Tibial artery (tissue), 4 donors: ENCODE measurements at regions of chr10 and their contacts with region 1.

Region 1: GRCh38 chr10:73644015-73644743 is 2.9 kb upstream of the MYOZ1 start:
- DNase-seq: peak; percentile 58 to 74
- H3K4me3 ChIP-seq: no peak overlapping the region
- H3K27ac ChIP-seq: peak overlapping the region; percentile 45 to 84
- H3K4me1 ChIP-seq: peaks cover 11 to 56% (median 29%) of the 10 kb centered on the region in 4 donors
- H3K27me3 ChIP-seq: no peaks in the 10 kb centered on the region
- CTCF ChIP-seq: peak; percentile 87 to 98

Region 2: DNA sequence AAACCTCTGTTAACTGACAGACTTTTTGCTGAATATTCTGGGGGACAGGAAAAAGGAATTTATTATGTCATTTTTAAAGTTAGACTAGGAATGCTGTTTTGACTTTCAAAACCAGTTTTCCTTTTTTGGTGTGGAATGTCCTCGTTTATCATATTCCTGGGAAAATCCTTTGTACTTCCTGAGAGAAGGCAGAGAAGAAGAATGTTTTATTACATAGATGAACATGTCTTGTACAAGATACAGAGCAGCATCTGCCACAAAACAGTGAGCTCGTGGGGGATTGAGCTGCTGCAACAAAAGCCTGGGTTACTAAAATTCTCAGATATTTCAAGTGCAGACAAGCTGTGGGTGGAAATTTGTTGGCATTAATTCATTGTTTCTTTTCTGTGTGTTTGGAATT is 932.0 kb before region 1 on chr10:
- intact Hi-C with region 1: no loop called
- DNase-seq: no peak
- H3K4me3 ChIP-seq: peak overlapping the region; percentile 27 to 38
- H3K27ac ChIP-seq: peak overlapping the region; percentile 65 to 75
- H3K4me1 ChIP-seq: peaks cover 0 to 68% (median 23%) of the 10 kb centered on the region in 4 donors
- H3K27me3 ChIP-seq: no peaks in the 10 kb centered on the region
- CTCF ChIP-seq: no peak

Region 3: GRCh38 chr10:73529089-73529832 is 114.9 kb before region 1 on chr10:
- intact Hi-C with region 1: loop called (anchors 2 kb)
- DNase-seq: peak in 1 of 2 donors; percentile 28
- H3K4me3 ChIP-seq: no peak overlapping the region
- H3K27ac ChIP-seq: no peak overlapping the region
- H3K4me1 ChIP-seq: no peaks in the 10 kb centered on the region
- H3K27me3 ChIP-seq: no peaks in the 10 kb centered on the region
- CTCF ChIP-seq: peak; percentile 77 to 92

Region 4: GRCh38 chr10:73559590-73559989 is 84.6 kb before region 1 on chr10:
- intact Hi-C with region 1: no loop called
- DNase-seq: no peak
- H3K4me3 ChIP-seq: no peak overlapping the region
- H3K27ac ChIP-seq: no peak overlapping the region
- H3K4me1 ChIP-seq: no peaks in the 10 kb centered on the region
- H3K27me3 ChIP-seq: no peaks in the 10 kb centered on the region
- CTCF ChIP-seq: no peak

Region 5: GRCh38 chr10:73625884-73626752 is 18.1 kb before region 1 on chr10:
- intact Hi-C with region 1: loop called (anchors 2 kb)
- DNase-seq: peak; percentile 95
- H3K4me3 ChIP-seq: peak overlapping the region; percentile 69 to 83
- H3K27ac ChIP-seq: peak overlapping the region; percentile 81 to 90
- H3K4me1 ChIP-seq: peaks cover 0 to 18% (median 7%) of the 10 kb centered on the region in 4 donors
- H3K27me3 ChIP-seq: no peaks in the 10 kb centered on the region
- CTCF ChIP-seq: no peak

Region 6: DNA sequence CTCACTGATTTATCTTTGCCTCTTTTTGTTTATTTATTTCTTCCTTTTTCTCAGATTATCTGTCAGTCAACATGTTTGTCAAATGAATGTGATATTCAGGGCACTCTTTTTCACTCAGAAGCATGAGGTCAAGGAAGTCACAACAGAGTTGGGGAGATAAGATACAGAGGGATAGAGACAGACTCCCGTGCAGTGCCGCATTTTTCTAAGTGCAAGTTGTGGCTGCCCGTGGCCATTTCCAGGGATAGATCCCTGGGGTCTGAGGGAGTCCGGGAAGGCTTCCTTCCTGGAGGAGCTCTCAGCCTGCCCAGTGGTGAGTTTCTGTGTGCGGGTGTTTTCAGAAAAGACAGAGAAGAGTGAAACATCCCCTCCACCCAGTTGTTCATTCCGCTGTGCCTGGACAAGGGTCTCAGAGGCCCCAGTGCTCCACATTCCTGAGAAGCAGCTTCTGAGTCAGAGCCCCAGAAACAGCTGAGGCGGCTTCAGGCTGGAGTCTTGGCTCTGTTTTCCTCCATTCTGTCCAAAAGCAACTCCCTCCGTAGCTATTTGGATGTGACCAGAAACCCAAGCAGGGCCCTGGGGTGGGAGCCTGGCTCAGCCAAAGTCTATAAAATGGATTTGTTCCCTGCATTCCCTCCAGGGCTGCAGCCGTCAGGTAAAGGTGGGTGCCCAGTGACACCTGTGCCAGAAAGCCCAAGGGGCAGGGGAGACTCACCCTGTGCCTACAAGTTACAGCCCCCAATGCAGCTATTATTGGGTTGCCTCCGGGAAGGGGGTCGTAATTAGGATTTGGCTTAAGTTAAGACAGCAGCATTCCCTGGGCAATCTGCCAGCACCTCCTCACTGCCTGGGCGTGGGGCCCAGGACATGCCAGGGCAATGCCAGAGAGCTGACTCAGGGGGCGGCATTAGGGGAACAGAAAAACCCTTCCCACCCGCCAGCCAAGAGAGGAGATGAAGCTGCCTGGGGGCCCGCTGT is 243.1 kb after region 1 on chr10:
- intact Hi-C with region 1: no loop called
- DNase-seq: peak; percentile 83 to 94
- H3K4me3 ChIP-seq: peak overlapping the region in 1 of 2 donors; percentile 3
- H3K27ac ChIP-seq: peak overlapping the region; percentile 70 to 79
- H3K4me1 ChIP-seq: peaks cover 9 to 47% (median 34%) of the 10 kb centered on the region in 4 donors
- H3K27me3 ChIP-seq: no peaks in the 10 kb centered on the region
- CTCF ChIP-seq: peak; percentile 8 to 22